MCF 10A (cell line): ENCODE measurements at regions of chr11 and their contacts with region 1.

Region 1: GRCh38 chr11:93089474-93090102 is 108.2 kb downstream of the SLC36A4 start:
- DNase-seq: peak; percentile 72
- H3K4me3 Mint-ChIP-seq: no peak overlapping the region
- H3K27ac Mint-ChIP-seq: no peak overlapping the region
- H3K4me1 Mint-ChIP-seq: no peaks in the 10 kb centered on the region
- H3K27me3 Mint-ChIP-seq: no peaks in the 10 kb centered on the region
- CTCF ChIP-seq: no peak

Region 2: GRCh38 chr11:93099806-93100205 is 10.2 kb after region 1 on chr11:
- CTCF ChIA-PET with region 1: interaction called, 11 read pairs
- POLR2A ChIA-PET with region 1: no interaction called
- intact Hi-C with region 1: no loop called
- DNase-seq: no peak
- H3K4me3 Mint-ChIP-seq: no peak overlapping the region
- H3K27ac Mint-ChIP-seq: peak overlapping the region; percentile 40
- H3K4me1 Mint-ChIP-seq: peaks cover 18% of the 10 kb centered on the region
- H3K27me3 Mint-ChIP-seq: no peaks in the 10 kb centered on the region
- CTCF ChIP-seq: no peak